ENCODE measurements at regions of chr12 and their contacts with region 1.

Region 1: GRCh38 chr12:110289044-110289710 is 8.1 kb downstream of the ATP2A2 start:
- DNase-seq: no peak
- H3K4me3 ChIP-seq: no peak overlapping the region
- H3K27ac ChIP-seq: no peak overlapping the region
- H3K4me1 ChIP-seq: 0 out of 7 replicates have a peak, but pooled peaks cover 0 to 3% (median 0%) of the 10 kb centered on the region in 4 experiments
- H3K27me3 ChIP-seq: no peaks in the 10 kb centered on the region
- CTCF ChIP-seq: no peak
- EP300 ChIP-seq: no peak
- POLR2A ChIP-seq: no peak
- RAD21 ChIP-seq: no peak

Region 2: DNA sequence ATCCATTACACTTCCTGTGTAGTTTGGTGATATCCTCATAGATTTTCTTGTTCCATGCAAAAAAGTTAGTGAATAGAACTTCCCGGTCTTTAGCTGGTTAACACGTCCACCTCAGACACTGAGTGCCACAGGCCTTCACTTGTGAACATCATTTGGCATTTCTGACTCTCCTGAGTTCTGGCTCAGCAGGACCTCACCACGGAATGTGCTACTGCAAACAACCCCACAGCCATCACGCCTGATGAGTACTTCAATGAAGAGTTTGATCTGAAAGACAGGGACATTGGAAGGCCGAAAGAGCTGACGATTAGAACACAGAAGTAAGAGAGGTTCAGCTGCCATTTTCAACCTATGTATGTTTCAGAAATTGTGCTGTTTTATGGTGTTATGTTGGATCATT is 260.9 kb before region 1 on chr12:
- CTCF ChIA-PET with region 1: no interaction called
- POLR2A ChIA-PET with region 1: no interaction called
- DNase-seq: no peak
- H3K4me3 ChIP-seq: no peak overlapping the region
- H3K27ac ChIP-seq: no peak overlapping the region
- H3K4me1 ChIP-seq: peaks cover 0 to 3% (median under 1%) of the 10 kb centered on the region in 4 experiments; a peak in 3 of 7 replicates
- H3K27me3 ChIP-seq: no peaks in the 10 kb centered on the region
- CTCF ChIP-seq: no peak
- EP300 ChIP-seq: no peak
- POLR2A ChIP-seq: no peak
- RAD21 ChIP-seq: no peak

Region 3: GRCh38 chr12:110301065-110301806 is 12.1 kb after region 1 on chr12:
- CTCF ChIA-PET with region 1: no interaction called
- POLR2A ChIA-PET with region 1: interaction called, 32 read pairs
- DNase-seq: no peak
- H3K4me3 ChIP-seq: no peak overlapping the region
- H3K27ac ChIP-seq: no peak overlapping the region
- H3K4me1 ChIP-seq: no peaks in the 10 kb centered on the region
- H3K27me3 ChIP-seq: no peaks in the 10 kb centered on the region
- CTCF ChIP-seq: no peak
- EP300 ChIP-seq: no peak
- POLR2A ChIP-seq: no peak
- RAD21 ChIP-seq: no peak

Measured in H1 (cell line).